RWPE1 (cell line): ENCODE measurements at regions of chr1 and their contacts with region 1.

Region 1: GRCh38 chr1:24391882-24392603 is 21.5 kb downstream of the STPG1 start:
- DNase-seq: no peak
- H3K27ac ChIP-seq: peak overlapping the region; percentile 89
- CTCF ChIP-seq: peak; percentile 80

Region 2: DNA sequence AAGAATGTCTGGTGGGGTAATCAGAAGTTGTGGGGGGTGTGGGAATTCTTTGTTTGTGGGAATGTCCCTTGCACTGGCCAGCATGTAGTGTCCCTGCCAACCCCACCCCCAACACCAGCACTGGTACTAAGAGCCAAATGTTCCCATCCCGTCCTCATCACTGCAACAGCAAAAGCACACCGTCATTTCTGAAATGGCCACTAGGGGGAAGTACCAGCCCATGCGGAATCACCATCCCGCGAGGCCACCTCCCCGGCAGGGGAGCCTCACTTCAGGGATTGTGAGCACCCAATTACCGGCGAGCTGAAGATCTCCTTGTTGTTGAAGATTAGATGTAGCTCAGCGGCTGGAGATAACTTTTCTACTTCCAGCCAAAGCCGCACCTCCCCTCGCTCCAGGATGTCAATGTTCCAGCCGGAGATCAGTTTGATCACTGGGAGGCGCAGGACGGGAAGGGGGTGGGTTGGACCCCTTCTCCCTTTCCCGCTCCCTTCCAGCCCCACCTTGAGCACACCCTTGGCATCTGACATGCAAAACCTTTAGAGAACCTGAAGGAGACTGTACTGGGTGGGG is 321.1 kb before region 1 on chr1:
- CTCF ChIA-PET with region 1: interaction called, 13 read pairs
- POLR2A ChIA-PET with region 1: no interaction called
- DNase-seq: peak; percentile 91
- H3K27ac ChIP-seq: peak overlapping the region; percentile 7; the same call in 1 of the 2 replicates
- CTCF ChIP-seq: peak; percentile 93

Region 3: DNA sequence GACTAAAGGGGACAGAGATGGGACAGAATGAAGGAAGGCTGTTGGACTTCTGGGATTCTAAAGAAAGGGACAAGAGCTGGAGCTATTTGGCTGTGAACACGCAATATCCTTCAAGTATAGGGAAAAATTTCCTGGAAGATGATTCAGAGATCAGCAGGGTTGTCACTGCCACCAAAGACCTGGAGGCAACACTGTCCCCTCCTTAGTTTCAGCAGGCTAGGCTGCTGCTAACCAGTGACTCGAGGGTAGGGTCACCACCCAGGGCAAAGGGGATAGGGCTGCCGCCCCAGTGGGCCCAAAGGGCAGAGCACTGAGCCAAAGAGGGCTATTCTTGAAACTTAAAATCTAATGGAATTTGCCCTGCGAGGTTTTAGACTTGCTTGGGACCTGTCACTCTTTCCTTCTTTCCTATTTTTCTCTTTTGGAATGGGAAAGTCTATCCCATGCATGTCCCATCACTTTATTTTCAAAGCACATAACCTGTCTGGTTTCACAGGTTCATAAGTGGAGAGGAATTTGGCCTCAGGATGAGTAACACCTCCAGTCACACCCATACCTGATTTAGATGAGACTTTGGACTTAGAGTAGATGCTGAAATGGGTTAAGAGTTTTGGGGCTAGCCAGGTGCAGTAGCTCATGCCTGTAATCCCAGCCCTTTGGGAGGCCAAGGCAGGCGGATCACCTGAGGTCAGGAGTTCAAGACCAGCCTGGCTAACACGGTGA is 216.8 kb before region 1 on chr1:
- CTCF ChIA-PET with region 1: no interaction called
- POLR2A ChIA-PET with region 1: no interaction called
- DNase-seq: no peak
- H3K27ac ChIP-seq: no peak overlapping the region
- CTCF ChIP-seq: no peak

Region 4: DNA sequence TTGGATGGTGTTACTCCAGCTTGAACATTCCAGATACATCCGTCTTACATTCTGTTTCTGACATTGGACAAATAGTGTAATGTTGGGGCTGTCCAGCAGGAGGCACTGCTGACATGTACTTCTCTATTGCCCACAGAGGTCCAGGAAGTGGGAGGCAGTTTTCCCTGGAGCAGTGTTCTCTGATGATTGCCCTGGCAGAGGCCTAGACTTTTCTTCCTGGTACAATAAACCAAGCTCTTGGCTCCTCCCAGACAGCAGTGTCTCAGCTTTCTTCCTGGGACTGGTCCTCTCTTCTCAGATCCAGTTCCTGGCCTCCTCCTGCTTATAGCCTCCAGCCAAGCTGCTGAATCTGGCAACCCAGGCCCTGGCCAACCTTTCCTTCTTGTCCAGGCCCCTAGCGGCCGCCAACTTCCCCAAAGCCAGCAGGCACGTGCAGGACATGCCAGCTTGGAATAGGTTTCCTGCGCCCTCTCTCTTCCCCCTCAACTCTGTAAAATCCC is 190.1 kb before region 1 on chr1:
- CTCF ChIA-PET with region 1: interaction called, 150 read pairs
- POLR2A ChIA-PET with region 1: interaction called, 3 read pairs
- DNase-seq: peak; percentile 74
- H3K27ac ChIP-seq: peak overlapping the region; percentile 75
- CTCF ChIP-seq: peak; percentile 73

Region 5: DNA sequence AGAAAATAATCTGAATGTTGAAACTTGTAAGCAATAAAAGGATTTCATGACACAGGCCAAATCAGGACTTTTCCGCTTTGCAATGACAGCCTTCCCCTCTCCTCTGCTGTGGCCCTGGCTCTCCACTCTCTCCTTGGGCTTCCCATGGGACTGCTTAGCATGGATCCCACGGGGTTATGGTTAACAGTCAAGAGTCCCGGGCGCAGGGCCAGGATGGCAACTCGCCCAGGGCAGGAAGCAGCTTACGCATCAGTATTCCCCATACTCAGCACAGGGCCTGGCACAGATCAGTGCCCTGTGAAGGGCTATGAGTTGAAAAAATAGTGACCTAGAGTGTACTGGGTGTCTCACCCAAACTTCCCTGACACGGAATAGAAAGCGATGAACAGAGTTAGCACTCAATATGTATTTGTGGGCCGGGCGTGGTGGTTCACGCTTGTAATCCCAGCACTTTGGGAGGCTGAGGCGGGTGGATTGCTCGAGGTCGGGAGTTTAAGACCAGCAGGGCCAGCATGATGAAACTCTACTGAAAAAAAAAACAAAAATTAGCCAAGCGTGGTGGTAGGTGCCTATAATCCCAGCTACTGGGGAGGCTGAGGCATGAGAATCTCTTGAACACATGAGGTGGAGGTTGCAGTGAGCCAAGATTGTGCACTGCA is 102.0 kb before region 1 on chr1:
- CTCF ChIA-PET with region 1: interaction called, 11 read pairs
- POLR2A ChIA-PET with region 1: no interaction called
- DNase-seq: peak; percentile 79
- H3K27ac ChIP-seq: peak overlapping the region; percentile 97
- CTCF ChIP-seq: no peak

Region 6: GRCh38 chr1:24321697-24322469 is 70.2 kb before region 1 on chr1:
- CTCF ChIA-PET with region 1: interaction called, 13 read pairs
- POLR2A ChIA-PET with region 1: no interaction called
- DNase-seq: peak; percentile 83
- H3K27ac ChIP-seq: peak overlapping the region; percentile 87
- CTCF ChIP-seq: no peak

Region 7: DNA sequence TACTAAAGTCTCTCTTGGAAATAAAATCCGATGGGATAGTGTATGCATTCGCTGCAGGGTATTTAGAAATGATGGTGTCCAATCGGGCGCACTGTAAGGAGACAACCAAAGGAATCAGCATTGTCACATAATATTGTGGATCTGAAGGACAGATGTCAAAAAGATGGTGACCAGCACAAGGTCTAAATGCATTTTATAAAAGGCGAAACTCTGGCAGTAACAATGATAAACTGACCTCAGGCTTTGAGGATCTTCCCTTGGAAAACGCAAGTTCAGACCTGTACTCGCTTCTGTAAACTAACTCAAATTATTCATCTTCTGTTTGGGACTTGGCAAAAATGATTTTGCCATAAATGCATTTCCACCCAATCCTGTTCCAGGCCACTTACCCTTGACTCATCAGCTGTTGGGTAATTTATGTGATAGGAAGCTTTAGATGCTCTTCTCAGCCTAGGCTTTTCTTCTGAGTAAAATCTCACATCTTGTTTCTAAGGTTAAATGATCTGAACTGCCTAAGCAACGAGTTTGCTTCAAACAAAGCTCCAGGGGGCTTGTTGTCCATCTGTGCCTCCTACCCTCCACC is 12.2 kb before region 1 on chr1:
- CTCF ChIA-PET with region 1: interaction called, 13 read pairs
- POLR2A ChIA-PET with region 1: no interaction called
- DNase-seq: peak; percentile 90
- H3K27ac ChIP-seq: peak overlapping the region; percentile 87; the same call in 1 of the 2 replicates
- CTCF ChIP-seq: no peak

Region 8: GRCh38 chr1:24491577-24492360 is 99.7 kb after region 1 on chr1:
- CTCF ChIA-PET with region 1: no interaction called
- POLR2A ChIA-PET with region 1: no interaction called
- DNase-seq: no peak
- H3K27ac ChIP-seq: no peak overlapping the region
- CTCF ChIP-seq: no peak

Region 9: GRCh38 chr1:24507405-24507804 is 115.4 kb after region 1 on chr1:
- CTCF ChIA-PET with region 1: no interaction called
- POLR2A ChIA-PET with region 1: no interaction called
- DNase-seq: no peak
- H3K27ac ChIP-seq: no peak overlapping the region
- CTCF ChIP-seq: no peak